CD14-positive monocyte (primary cell): ENCODE measurements at regions of chr1 and their contacts with region 1.

Region 1: GRCh38 chr1:107877092-107877491 is 87.9 kb downstream of the VAV3 start:
- DNase-seq: peak; percentile 72 to 90 (median 88)
- H3K4me3 ChIP-seq: peak overlapping the region in 1 of 3 experiments; percentile 49
- H3K4me3 Mint-ChIP-seq: peak overlapping the region; percentile 25 to 64
- H3K27ac ChIP-seq: peak overlapping the region in 1 of 2 donors; percentile 75
- H3K27ac Mint-ChIP-seq: peak overlapping the region; percentile 82 to 95 (median 89)
- H3K4me1 ChIP-seq: peaks cover 57 to 74% of the 10 kb centered on the region in 2 donors
- H3K4me1 Mint-ChIP-seq: peaks cover 65% of the 10 kb centered on the region
- H3K27me3 ChIP-seq: no peaks in the 10 kb centered on the region
- H3K27me3 Mint-ChIP-seq: no peaks in the 10 kb centered on the region
- CTCF ChIP-seq: no peak

Region 2: DNA sequence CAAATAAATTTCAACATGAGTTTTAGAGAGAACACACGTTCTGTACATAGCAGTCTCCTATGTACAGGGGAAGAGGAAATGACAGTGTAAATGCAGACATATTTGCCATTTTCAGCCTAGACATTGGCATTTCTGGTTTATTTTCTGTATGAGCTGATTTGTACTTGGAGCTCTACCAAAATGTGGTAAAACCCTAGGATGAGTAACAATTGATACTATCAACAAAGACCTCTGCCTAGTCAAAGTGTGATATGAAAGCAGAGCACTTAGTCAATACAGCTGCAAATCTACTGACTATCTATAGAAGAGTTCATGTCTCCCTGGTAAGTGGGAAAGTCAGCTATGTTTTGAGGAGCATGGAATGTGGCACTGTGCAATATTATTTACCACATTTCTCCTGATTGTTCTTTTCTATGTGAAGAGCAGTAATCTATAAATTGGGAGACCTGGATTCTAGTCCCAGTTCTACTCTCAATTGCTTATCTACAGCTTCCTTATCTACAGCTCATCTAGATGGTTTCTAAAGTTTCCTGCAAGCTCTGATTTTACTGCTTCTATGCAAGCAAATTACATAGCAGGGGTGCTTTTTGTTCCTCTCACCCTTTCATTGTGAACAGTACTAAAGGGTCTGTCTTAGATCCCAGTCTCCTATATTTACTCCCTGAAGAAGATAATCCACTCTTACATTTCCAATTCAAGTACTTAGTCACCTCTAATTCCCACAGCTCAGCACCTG is 402.0 kb before region 1 on chr1:
- intact Hi-C with region 1: no loop called
- DNase-seq: no peak
- H3K4me3 ChIP-seq: no peak overlapping the region
- H3K4me3 Mint-ChIP-seq: no peak overlapping the region
- H3K27ac ChIP-seq: no peak overlapping the region
- H3K27ac Mint-ChIP-seq: no peak overlapping the region
- H3K4me1 ChIP-seq: no peaks in the 10 kb centered on the region
- H3K4me1 Mint-ChIP-seq: no peaks in the 10 kb centered on the region
- H3K27me3 ChIP-seq: peaks cover 11 to 15% of the 10 kb centered on the region in 2 donors
- H3K27me3 Mint-ChIP-seq: peaks cover 7 to 9% (median 8%) of the 10 kb centered on the region in 3 donors
- CTCF ChIP-seq: no peak

Region 3: GRCh38 chr1:107936498-107937481 is 59.7 kb after region 1 on chr1:
- intact Hi-C with region 1: loop called in 1 of 2 experiments (anchors 5 kb)
- DNase-seq: peak; percentile 86 to 95 (median 94)
- H3K4me3 ChIP-seq: peak overlapping the region in 2 of 3 experiments; percentile 27 to 56
- H3K4me3 Mint-ChIP-seq: peak overlapping the region; percentile 53 to 80
- H3K27ac ChIP-seq: peak overlapping the region; percentile 78 to 95
- H3K27ac Mint-ChIP-seq: peak overlapping the region; percentile 95 to 99 (median 98)
- H3K4me1 ChIP-seq: peaks cover 69 to 75% of the 10 kb centered on the region in 2 donors
- H3K4me1 Mint-ChIP-seq: peaks cover 71% of the 10 kb centered on the region
- H3K27me3 ChIP-seq: no peaks in the 10 kb centered on the region
- H3K27me3 Mint-ChIP-seq: no peaks in the 10 kb centered on the region
- CTCF ChIP-seq: no peak

Region 4: GRCh38 chr1:108049178-108049819 is 172.2 kb after region 1 on chr1:
- intact Hi-C with region 1: loop called (anchors 10 kb)
- DNase-seq: peak; percentile 59 to 77 (median 66)
- H3K4me3 ChIP-seq: peak overlapping the region in 1 of 3 experiments; percentile 70
- H3K4me3 Mint-ChIP-seq: no peak overlapping the region
- H3K27ac ChIP-seq: peak overlapping the region; percentile 86 to 91
- H3K27ac Mint-ChIP-seq: peak overlapping the region in 1 of 7 donors; percentile 15
- H3K4me1 ChIP-seq: peaks cover 66 to 70% of the 10 kb centered on the region in 2 donors
- H3K4me1 Mint-ChIP-seq: peaks cover 54% of the 10 kb centered on the region
- H3K27me3 ChIP-seq: no peaks in the 10 kb centered on the region
- H3K27me3 Mint-ChIP-seq: peaks cover 0 to 2% (median 2%) of the 10 kb centered on the region in 3 donors
- CTCF ChIP-seq: peak; percentile 67